Activated CD8-positive, alpha-beta memory T cell treated with anti-CD3 and anti-CD28 coated beads, Interleukin-2, amount 10 ng/mL, durations not matched to agents 7 days and 5 days (primary cell): ENCODE measurements at regions of chr5 and their contacts with region 1.

Region 1: DNA sequence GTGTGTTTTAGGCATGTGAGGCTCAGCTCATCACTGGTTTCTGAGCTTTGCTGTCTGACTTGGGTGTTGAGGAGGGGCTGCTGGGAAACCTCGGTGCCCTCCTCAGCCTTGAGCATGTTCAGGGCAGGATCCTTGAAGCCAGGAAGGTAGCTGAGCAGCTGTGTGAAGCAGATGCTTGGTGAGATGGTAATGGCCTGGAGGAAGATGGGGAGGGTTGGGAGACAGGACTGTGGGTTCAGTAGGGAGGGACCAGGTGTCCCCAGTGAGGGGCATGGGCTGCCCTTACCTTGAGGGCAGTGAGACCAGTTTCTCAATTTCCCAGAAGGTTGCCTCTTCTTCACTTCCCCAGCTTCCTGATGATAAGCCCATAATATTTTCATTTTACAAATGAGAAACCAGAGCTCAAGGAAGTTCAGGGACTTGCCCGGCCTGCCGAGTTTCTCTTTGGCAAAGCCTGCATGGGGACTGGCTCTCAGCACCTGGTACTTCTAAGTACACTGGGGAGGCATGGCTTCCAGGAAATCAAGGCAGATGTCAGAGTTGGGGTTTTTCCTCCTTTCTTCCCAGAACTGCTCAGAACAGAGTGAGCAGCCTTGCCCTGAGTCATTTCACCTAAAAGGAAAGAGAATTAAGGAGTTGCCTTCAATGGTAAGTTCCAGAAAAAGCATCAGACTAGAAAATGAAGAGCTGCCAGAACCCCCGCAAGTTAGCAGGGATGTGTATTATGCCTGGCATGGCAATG is 225.7 kb downstream of the MAST4 start:
- DNase-seq: peak; percentile 82
- ATAC-seq: peak; percentile 84
- H3K4me3 Mint-ChIP-seq: peak overlapping the region; percentile 52
- H3K27ac Mint-ChIP-seq: peak overlapping the region; percentile 92
- H3K4me1 Mint-ChIP-seq: peaks cover 45% of the 10 kb centered on the region
- H3K27me3 Mint-ChIP-seq: peaks cover 3% of the 10 kb centered on the region

Region 2: DNA sequence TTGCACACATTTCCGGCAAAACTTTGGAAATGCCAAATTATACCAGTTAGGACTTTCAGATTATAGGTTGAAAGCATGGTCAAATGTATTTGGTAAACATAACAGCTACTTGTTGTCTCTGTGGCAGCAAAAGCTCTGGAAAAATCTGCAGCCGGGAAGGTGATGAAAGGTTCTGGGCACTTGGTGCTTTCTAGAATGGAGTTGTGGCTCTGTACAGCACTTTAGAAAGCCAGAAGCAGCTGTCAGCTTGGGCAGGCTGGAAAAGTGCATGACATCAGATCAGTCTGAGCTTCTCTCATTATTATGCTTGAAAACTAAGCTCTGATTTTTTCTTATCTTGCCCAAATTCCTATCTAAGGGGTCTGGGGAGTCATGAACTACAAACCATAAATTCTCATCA is 344.3 kb before region 1 on chr5:
- CTCF ChIA-PET with region 1: no interaction called
- DNase-seq: no peak
- ATAC-seq: no peak
- H3K4me3 Mint-ChIP-seq: no peak overlapping the region
- H3K27ac Mint-ChIP-seq: no peak overlapping the region
- H3K4me1 Mint-ChIP-seq: no peaks in the 10 kb centered on the region
- H3K27me3 Mint-ChIP-seq: peaks cover 6% of the 10 kb centered on the region

Region 3: GRCh38 chr5:66609615-66610014 is 212.2 kb before region 1 on chr5:
- CTCF ChIA-PET with region 1: no interaction called
- DNase-seq: no peak
- ATAC-seq: peak; percentile 36
- H3K4me3 Mint-ChIP-seq: no peak overlapping the region
- H3K27ac Mint-ChIP-seq: no peak overlapping the region
- H3K4me1 Mint-ChIP-seq: peaks cover 6% of the 10 kb centered on the region
- H3K27me3 Mint-ChIP-seq: peaks cover 61% of the 10 kb centered on the region

Region 4: GRCh38 chr5:66779528-66779927 is 42.3 kb before region 1 on chr5:
- CTCF ChIA-PET with region 1: no interaction called
- DNase-seq: no peak
- ATAC-seq: no peak
- H3K4me3 Mint-ChIP-seq: no peak overlapping the region
- H3K27ac Mint-ChIP-seq: no peak overlapping the region
- H3K4me1 Mint-ChIP-seq: no peaks in the 10 kb centered on the region
- H3K27me3 Mint-ChIP-seq: peaks cover 19% of the 10 kb centered on the region

Region 5: DNA sequence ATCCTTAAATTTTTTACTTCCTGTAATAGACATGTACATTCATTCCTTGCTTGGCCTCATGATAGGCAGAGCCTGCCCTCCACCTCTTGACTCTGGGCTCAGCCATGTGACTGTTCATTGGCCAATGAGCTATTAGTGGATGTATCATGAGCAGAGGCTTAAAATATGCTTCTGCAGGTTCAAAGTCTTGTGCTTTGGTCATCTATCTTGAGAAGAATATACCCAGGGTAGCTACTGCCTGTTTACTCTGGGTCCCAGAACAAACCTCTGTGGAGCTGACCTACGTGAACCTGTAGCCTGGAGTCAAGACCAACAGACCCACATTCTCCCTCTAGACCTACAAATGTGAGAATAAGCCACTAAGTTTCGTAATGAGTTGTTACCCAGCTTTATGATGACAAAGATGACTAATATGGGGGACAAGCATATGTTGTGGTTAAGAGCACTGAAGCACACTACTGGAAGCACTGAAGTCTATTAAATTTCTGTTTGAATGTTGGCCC is 18.7 kb after region 1 on chr5:
- CTCF ChIA-PET with region 1: interaction called, 117 read pairs
- DNase-seq: peak; percentile 85
- ATAC-seq: peak; percentile 86
- H3K4me3 Mint-ChIP-seq: peak overlapping the region; percentile 38
- H3K27ac Mint-ChIP-seq: peak overlapping the region; percentile 97
- H3K4me1 Mint-ChIP-seq: peaks cover 67% of the 10 kb centered on the region
- H3K27me3 Mint-ChIP-seq: no peaks in the 10 kb centered on the region